A673 (cell line): ENCODE measurements at regions of chr4 and their contacts with region 1.

Region 1: DNA sequence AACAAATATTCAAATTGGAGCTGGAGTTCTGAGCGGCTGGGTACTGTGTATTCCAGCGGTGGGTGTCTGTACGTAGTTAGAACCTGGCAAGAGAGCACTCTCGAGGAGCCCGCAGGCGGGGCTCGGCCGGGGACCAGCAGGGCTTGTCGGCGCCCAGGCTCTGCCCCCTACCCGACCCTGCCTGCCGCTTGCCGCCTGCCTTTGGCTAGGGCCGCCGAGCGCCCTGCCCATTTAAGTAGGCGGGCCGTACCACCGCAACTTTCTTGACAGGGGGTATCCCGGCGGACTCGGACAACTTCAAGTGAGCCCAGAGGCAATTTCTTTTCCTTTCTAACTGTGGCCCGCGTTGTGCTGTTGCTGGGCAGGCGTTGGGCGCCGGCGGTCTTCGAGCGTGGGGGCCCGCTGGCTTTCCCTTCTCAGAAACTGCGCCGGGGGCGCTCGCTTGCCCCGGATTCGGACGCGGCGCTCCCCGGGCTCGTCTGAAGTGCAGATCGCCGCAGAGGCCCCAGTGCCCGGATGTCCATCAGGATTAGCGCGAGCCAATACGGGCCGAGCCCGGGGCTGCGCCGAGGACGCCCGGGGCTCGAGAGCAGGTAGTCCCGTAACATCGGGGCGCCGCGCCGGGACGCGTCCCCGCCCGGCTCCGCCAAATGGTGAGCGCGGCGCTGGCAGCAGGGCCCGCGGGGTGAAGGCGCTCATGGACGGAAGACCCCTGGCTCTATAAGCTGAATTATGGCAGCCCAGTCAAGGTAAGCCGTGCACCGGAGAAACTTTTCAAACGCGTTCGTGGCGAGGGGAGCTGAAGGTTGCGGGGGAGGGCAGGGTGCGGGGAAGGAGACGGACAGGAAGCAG is 72.1 kb downstream of the AFF1 start:
- DNase-seq: peak; percentile 88
- H3K4me3 ChIP-seq: peak overlapping the region; percentile 92
- H3K27ac ChIP-seq: peak overlapping the region; percentile 96
- H3K4me1 ChIP-seq: peaks cover 30% of the 10 kb centered on the region
- H3K27me3 ChIP-seq: no peaks in the 10 kb centered on the region
- CTCF ChIP-seq: no peak

Region 2: GRCh38 chr4:86927843-86928395 is 79.0 kb before region 1 on chr4:
- CTCF ChIA-PET with region 1: no interaction called
- POLR2A ChIA-PET with region 1: interaction called, 4 read pairs
- intact Hi-C with region 1: loop called (anchors 5 kb)
- DNase-seq: no peak
- H3K4me3 ChIP-seq: no peak overlapping the region
- H3K27ac ChIP-seq: no peak overlapping the region
- H3K4me1 ChIP-seq: peaks cover 9% of the 10 kb centered on the region
- H3K27me3 ChIP-seq: no peaks in the 10 kb centered on the region
- CTCF ChIP-seq: no peak

Region 3: DNA sequence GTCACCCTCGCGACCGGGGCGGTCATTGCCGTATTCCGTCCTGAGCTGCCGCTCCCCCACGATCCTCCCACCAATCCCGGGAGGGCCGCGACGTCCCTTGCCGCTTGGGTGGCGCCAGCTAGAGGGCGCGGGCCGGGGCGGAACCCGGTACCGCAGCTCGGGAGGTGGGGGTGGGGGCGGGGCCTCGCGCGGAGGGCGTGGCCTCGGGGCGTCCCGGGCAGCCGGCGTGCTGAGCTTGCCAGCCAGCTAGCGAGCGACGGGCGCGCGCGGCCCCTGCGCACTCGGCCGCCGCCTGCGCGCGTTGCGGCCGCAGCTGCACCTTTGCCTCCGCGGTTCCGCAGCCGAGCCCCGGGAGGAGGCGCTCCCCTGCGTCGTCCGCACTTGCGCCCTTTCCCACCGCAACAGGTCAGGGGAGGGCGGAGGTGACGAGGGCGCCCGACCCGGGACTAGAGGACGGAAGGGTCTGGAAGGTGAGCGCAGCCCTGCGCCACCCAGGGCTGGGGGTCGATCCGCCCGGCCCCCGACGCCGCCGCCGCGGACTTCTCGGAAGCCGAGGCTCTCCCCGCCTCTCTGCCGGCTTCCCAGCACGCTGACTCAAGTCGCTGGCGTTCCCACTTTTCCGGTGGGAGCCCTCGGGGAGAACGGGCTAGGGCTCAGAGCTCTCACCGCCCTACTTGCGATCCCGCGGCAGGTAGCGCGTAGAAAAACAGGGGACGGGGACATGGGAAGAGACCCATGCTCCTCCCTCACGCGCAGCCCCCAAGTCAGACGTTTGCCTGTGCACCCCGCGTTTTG is 71.9 kb before region 1 on chr4 and contains the start of gene AFF1:
- CTCF ChIA-PET with region 1: no interaction called
- POLR2A ChIA-PET with region 1: no interaction called
- intact Hi-C with region 1: loop called (anchors 5 kb)
- DNase-seq: peak; percentile 87
- H3K4me3 ChIP-seq: peak within 1 kb of the TSS; percentile 88
- H3K27ac ChIP-seq: peak within 1 kb of the TSS; percentile 78
- H3K4me1 ChIP-seq: peaks cover 6% of the 10 kb centered on the region
- H3K27me3 ChIP-seq: no peaks in the 10 kb centered on the region
- CTCF ChIP-seq: peak; percentile 24; the same call in 1 of the 2 replicates
- total RNA-seq, gene AFF1: 60.1 and 65.4 TPM in 2 replicates

Region 4: GRCh38 chr4:86965019-86965976 is 41.6 kb before region 1 on chr4:
- CTCF ChIA-PET with region 1: no interaction called
- POLR2A ChIA-PET with region 1: no interaction called
- intact Hi-C with region 1: loop called (anchors 5 kb)
- DNase-seq: peak; percentile 20
- H3K4me3 ChIP-seq: no peak overlapping the region
- H3K27ac ChIP-seq: peak overlapping the region; percentile 96
- H3K4me1 ChIP-seq: peaks cover 86% of the 10 kb centered on the region
- H3K27me3 ChIP-seq: no peaks in the 10 kb centered on the region
- CTCF ChIP-seq: no peak

Region 5: GRCh38 chr4:87093443-87094123 is 86.7 kb after region 1 on chr4:
- CTCF ChIA-PET with region 1: no interaction called
- POLR2A ChIA-PET with region 1: no interaction called
- intact Hi-C with region 1: loop called (anchors 5 kb)
- DNase-seq: peak; percentile 68
- H3K4me3 ChIP-seq: no peak overlapping the region
- H3K27ac ChIP-seq: no peak overlapping the region
- H3K4me1 ChIP-seq: peaks cover 13% of the 10 kb centered on the region
- H3K27me3 ChIP-seq: no peaks in the 10 kb centered on the region
- CTCF ChIP-seq: peak; percentile 54